Natural killer cell (primary cell): ENCODE measurements at regions of chr6 and their contacts with region 1.

Region 1: DNA sequence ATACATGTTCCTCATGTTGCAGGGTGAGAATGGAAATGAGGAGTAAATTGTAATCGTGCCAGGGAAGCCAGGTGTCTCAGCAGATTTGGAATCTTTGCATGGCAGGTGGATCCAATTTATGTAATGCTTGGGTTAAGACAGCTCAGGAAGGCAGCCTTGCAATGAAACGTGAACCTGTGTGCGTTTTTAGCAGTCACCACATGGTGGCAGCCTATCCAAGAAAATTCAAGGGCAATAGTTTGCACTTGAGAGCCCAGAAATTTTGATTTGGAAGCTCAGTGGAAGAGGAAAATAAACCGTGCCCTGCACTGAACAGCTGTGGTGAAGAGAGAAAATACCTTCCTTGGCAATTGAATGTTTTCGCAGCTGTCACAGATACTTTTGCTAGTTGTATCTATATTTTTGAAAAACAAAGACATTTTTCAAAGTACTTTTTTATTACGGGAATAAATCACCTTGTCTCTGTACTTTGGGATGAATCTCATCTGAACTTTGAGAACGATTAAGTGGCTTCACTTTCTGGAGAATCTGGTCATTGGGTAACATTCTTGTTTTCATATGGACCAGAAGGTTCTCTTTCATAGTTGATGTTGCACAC is 26.5 kb downstream of the MTHFD1L start:
- DNase-seq: peak; percentile 21 to 76
- ATAC-seq: peak; percentile 58 to 70 (median 61)
- H3K4me3 ChIP-seq: no peak overlapping the region
- H3K4me3 Mint-ChIP-seq: no peak overlapping the region
- H3K27ac ChIP-seq: no peak overlapping the region
- H3K27ac Mint-ChIP-seq: no peak overlapping the region
- H3K4me1 ChIP-seq: peaks cover 10% of the 10 kb centered on the region
- H3K4me1 Mint-ChIP-seq: peaks cover 20 to 23% of the 10 kb centered on the region in 2 donors
- H3K27me3 ChIP-seq: no peaks in the 10 kb centered on the region
- H3K27me3 Mint-ChIP-seq: no peaks in the 10 kb centered on the region
- CTCF ChIP-seq: peak; percentile 87

Region 2: GRCh38 chr6:150652848-150653613 is 239.0 kb before region 1 on chr6:
- intact Hi-C with region 1: no loop called
- DNase-seq: no peak
- ATAC-seq: no peak
- H3K4me3 ChIP-seq: no peak overlapping the region
- H3K4me3 Mint-ChIP-seq: no peak overlapping the region
- H3K27ac ChIP-seq: no peak overlapping the region
- H3K27ac Mint-ChIP-seq: no peak overlapping the region
- H3K4me1 ChIP-seq: no peaks in the 10 kb centered on the region
- H3K4me1 Mint-ChIP-seq: no peaks in the 10 kb centered on the region
- H3K27me3 ChIP-seq: no peaks in the 10 kb centered on the region
- H3K27me3 Mint-ChIP-seq: no peaks in the 10 kb centered on the region
- CTCF ChIP-seq: no peak

Region 3: GRCh38 chr6:151475653-151476523 is 583.9 kb after region 1 on chr6:
- intact Hi-C with region 1: loop called (anchors 5 kb)
- DNase-seq: peak in 1 of 2 donors; percentile 80
- ATAC-seq: peak in 2 of 3 donors; percentile 51 to 57
- H3K4me3 ChIP-seq: no peak overlapping the region
- H3K4me3 Mint-ChIP-seq: no peak overlapping the region
- H3K27ac ChIP-seq: no peak overlapping the region
- H3K27ac Mint-ChIP-seq: no peak overlapping the region
- H3K4me1 ChIP-seq: peaks cover 4% of the 10 kb centered on the region
- H3K4me1 Mint-ChIP-seq: peaks cover under 1 to 5% of the 10 kb centered on the region in 2 donors
- H3K27me3 ChIP-seq: no peaks in the 10 kb centered on the region
- H3K27me3 Mint-ChIP-seq: no peaks in the 10 kb centered on the region
- CTCF ChIP-seq: peak; percentile 95